A673 (cell line): ENCODE measurements at regions of chr19 and their contacts with region 1.

Region 1: GRCh38 chr19:29610563-29611271 is 4.6 kb downstream of the POP4 start:
- DNase-seq: peak; percentile 74
- H3K4me3 ChIP-seq: no peak overlapping the region
- H3K27ac ChIP-seq: no peak overlapping the region
- H3K4me1 ChIP-seq: no peaks in the 10 kb centered on the region
- H3K27me3 ChIP-seq: no peaks in the 10 kb centered on the region
- CTCF ChIP-seq: peak; percentile 89

Region 2: DNA sequence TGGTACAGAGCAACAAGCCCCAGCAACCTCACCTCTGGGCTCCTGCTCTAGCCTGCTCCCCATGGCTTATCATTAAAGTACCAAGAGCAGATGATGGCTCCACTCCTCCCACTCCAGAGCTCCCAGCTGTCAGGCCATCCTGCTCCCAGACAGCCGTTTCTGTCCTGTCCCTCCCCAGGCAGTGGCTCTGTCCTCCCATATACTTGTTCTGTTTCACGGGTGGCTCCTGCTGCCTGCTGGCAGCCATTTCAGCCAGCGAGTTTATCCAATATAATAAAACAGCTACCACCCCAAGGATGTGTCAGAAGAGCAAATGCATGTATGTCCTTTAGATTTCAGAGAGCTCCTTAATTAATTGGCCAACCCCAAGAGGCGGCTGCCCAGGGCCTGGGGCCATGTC is 164.4 kb before region 1 on chr19:
- CTCF ChIA-PET with region 1: no interaction called
- POLR2A ChIA-PET with region 1: no interaction called
- intact Hi-C with region 1: no loop called
- DNase-seq: no peak
- H3K4me3 ChIP-seq: no peak overlapping the region
- H3K27ac ChIP-seq: no peak overlapping the region
- H3K4me1 ChIP-seq: no peaks in the 10 kb centered on the region
- H3K27me3 ChIP-seq: no peaks in the 10 kb centered on the region
- CTCF ChIP-seq: no peak

Region 3: DNA sequence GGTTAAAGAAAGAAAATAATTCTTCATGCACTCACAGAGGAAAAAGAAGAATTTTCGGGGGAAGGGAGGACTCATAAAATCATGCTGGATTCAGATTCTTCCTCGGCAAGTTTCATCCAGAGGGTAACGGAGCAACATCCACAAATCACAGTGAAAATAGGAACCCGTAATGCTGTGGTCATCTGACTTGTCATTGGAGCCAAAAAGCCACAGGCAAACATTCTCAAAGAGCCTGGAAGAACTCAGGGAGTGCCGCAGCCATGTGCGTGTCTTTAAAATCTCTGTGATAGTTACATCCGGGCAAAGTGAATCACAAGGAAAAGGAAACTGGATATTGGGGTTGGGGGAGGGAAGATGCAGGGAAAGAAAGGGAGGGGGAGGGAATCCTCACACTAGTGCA is 117.9 kb before region 1 on chr19:
- CTCF ChIA-PET with region 1: no interaction called
- POLR2A ChIA-PET with region 1: no interaction called
- intact Hi-C with region 1: no loop called
- DNase-seq: no peak
- H3K4me3 ChIP-seq: no peak overlapping the region
- H3K27ac ChIP-seq: no peak overlapping the region
- H3K4me1 ChIP-seq: no peaks in the 10 kb centered on the region
- H3K27me3 ChIP-seq: peaks cover 15% of the 10 kb centered on the region
- CTCF ChIP-seq: no peak

Region 4: GRCh38 chr19:29694669-29695627 is 84.2 kb after region 1 on chr19:
- CTCF ChIA-PET with region 1: interaction called, 10 read pairs
- POLR2A ChIA-PET with region 1: no interaction called
- intact Hi-C with region 1: loop called (anchors 1 kb)
- DNase-seq: peak; percentile 67
- H3K4me3 ChIP-seq: no peak overlapping the region
- H3K27ac ChIP-seq: no peak overlapping the region
- H3K4me1 ChIP-seq: no peaks in the 10 kb centered on the region
- H3K27me3 ChIP-seq: no peaks in the 10 kb centered on the region
- CTCF ChIP-seq: peak; percentile 82

Region 5: DNA sequence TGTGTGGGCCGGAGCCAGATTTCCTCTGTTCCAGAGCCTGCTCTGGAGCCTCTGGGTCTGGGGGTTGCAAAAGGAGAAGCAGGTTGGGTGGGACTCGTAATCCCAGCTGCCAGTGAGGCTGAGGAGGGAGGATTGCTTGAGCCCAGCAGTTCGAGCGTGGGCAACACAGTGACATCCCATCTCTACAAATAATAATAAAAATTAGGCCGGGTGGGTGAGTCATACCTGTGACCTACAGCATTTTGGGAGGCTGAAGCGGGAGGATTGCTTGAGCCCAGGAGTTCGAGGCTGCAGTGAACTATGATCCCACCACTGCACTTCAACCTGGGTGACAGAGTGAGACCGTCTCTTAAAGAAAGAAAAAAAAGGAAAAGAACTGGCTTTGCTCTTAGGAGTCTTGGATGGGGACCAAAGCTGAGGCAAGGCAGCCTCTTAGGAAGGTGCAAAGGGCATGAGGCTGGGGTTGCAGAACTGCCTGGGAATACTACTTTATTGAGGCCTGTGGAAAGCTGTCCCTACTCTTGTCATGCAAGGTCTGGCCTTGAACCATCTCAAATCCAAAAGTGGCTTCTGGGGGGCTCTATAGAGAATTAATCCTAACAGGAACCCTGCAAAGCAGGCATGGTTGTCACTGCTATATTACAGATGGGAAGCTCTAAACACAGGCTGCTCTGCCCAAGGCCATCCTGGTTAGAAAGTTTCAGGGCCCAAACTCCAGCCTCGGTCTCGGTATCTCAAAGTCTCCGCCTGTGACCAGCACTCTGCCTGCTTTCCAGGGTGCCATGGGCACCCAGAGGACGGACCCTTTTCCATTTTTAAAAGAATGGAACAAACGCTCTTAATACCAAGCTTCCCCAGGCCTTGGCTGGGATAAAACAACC is 105.2 kb after region 1 on chr19:
- CTCF ChIA-PET with region 1: interaction called, 10 read pairs
- POLR2A ChIA-PET with region 1: interaction called, 3 read pairs
- intact Hi-C with region 1: loop called (anchors 1 kb)
- DNase-seq: no peak
- H3K4me3 ChIP-seq: peak overlapping the region; percentile 87
- H3K27ac ChIP-seq: peak overlapping the region; percentile 94
- H3K4me1 ChIP-seq: peaks cover 8% of the 10 kb centered on the region
- H3K27me3 ChIP-seq: no peaks in the 10 kb centered on the region
- CTCF ChIP-seq: no peak